B cell (primary cell): ENCODE measurements at regions of chr19 and their contacts with region 1.

Region 1: GRCh38 chr19:4182084-4182810 is at the starts of genes ANKRD24 and SIRT6:
- DNase-seq: peak; percentile 97
- ATAC-seq: peak; percentile 83
- H3K4me3 ChIP-seq: peak within 1 kb of the TSS; percentile 65 to 91 (median 85)
- H3K4me3 Mint-ChIP-seq: peak within 1 kb of the TSS; percentile 99
- H3K27ac ChIP-seq: peak within 1 kb of the TSS; percentile 72 to 95
- H3K27ac Mint-ChIP-seq: peak within 1 kb of the TSS; percentile 98
- H3K4me1 ChIP-seq: peaks cover 20 to 32% of the 10 kb centered on the region in 2 donors
- H3K4me1 Mint-ChIP-seq: peaks cover 37% of the 10 kb centered on the region
- H3K27me3 ChIP-seq: no peaks in the 10 kb centered on the region
- H3K27me3 Mint-ChIP-seq: peaks cover 6% of the 10 kb centered on the region
- CTCF ChIP-seq: no peak
- total RNA-seq, gene ANKRD24: 0.37 and 1.4 TPM in 2 replicates
- total RNA-seq, gene SIRT6: 27.8 and 30.4 TPM in 2 replicates

Region 2: DNA sequence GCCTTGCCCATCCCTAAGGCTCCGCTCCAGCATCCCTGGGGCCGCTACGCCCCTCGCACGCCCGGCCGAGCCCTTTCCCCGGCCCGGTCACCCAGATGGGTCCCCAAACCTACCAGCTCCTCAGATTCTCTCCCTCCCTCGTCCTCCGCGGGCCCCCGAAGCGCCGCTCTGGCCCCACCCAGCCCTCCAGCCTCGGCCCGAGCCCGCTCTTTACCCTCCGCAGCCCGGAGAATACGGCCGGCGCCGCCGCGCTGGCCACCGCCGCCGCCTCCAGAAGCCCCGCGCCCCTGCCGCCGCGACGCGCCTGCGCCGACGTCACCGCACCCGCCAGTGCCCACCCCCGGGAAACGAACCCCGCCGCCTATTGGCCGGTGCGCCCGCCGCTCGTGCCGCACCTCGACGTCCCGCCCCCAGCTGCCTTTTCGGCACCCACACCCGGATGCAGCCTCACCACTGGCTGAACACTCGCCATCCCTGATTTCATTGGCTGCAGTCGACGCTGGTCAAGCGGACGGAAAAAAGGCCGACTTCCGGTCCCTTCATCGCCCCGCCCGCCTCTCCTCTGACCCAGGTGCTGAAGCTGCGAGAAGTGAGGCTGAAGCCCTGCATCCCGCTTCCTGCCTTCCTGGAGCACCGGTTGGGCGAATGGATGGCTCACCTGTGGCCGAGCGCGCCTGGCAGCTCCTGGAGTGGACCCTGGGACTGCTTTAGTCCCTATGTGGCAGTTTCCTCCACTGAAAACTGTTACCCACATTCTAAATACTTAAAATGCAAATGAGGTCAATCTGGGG is 211.2 kb before region 1 on chr19 and contains the start of gene DAPK3:
- CTCF ChIA-PET with region 1: no interaction called
- POLR2A ChIA-PET with region 1: no interaction called
- intact Hi-C with region 1: loop called (anchors 2 kb)
- DNase-seq: peak; percentile 93
- ATAC-seq: peak; percentile 97
- H3K4me3 ChIP-seq: peak within 1 kb of the TSS; percentile 41 to 93 (median 80)
- H3K4me3 Mint-ChIP-seq: peak within 1 kb of the TSS; percentile 94
- H3K27ac ChIP-seq: peak within 1 kb of the TSS; percentile 63 to 85
- H3K27ac Mint-ChIP-seq: peak within 1 kb of the TSS; percentile 91
- H3K4me1 ChIP-seq: peaks cover 14 to 18% of the 10 kb centered on the region in 2 donors
- H3K4me1 Mint-ChIP-seq: peaks cover 25% of the 10 kb centered on the region
- H3K27me3 ChIP-seq: no peaks in the 10 kb centered on the region
- H3K27me3 Mint-ChIP-seq: no peaks in the 10 kb centered on the region
- CTCF ChIP-seq: no peak
- total RNA-seq, gene DAPK3: 41.0 and 47.4 TPM in 2 replicates